B cell (primary cell): ENCODE measurements at regions of chr9 and their contacts with region 1.

Region 1: DNA sequence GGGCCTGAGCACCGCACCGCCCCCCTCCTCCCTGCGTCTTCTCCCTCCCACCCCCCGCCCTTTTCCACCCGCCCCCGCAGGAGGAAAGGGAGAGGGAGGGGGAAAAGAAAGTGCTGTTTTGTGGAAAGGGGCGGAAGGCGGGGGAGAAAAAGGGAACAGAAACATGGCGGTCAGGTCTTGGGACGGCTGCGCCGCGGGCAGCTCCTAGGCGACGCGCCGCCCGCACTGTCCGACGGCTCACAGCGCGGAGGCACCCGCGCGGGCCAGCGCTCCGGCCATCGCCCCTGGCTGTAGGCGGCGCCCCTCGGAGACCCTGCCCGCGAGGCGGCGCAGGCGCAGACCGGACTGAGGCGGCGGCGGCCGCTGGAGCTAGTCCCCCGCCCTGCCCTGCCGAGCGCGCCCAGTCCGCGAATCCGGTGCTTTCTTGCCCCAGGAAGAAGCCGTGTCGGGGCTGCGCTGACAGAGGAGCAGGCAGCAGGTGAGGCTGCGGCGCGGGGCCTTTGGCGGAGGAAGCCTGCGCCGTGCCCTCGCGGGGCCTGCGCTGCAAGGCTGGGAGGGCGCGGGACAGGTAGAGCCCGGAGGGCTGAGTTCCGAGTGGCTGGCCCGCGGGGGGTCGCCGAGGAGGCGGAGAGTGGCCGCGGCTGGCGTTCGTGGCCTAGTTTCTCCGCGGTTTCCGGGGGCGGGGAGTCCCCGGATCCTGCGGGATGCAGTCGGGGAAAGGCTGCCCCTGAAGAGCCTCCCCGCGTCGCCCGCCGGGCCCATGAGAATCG is at the start of gene DENND4C:
- DNase-seq: peak; percentile 87
- ATAC-seq: peak; percentile 76
- H3K4me3 ChIP-seq: peak within 1 kb of the TSS; percentile 79 to 89 (median 83)
- H3K4me3 Mint-ChIP-seq: no peak within 1 kb of the TSS
- H3K27ac ChIP-seq: peak within 1 kb of the TSS; percentile 28 to 72
- H3K27ac Mint-ChIP-seq: peak within 1 kb of the TSS; percentile 88
- H3K4me1 ChIP-seq: peaks cover 23 to 27% of the 10 kb centered on the region in 2 donors
- H3K4me1 Mint-ChIP-seq: peaks cover 15% of the 10 kb centered on the region
- H3K27me3 ChIP-seq: no peaks in the 10 kb centered on the region
- H3K27me3 Mint-ChIP-seq: no peaks in the 10 kb centered on the region
- CTCF ChIP-seq: no peak
- total RNA-seq, gene DENND4C: 44.8 and 52.4 TPM in 2 replicates

Region 2: GRCh38 chr9:19127881-19128500 is 102.5 kb before region 1 on chr9:
- CTCF ChIA-PET with region 1: no interaction called
- POLR2A ChIA-PET with region 1: interaction called, 4 read pairs
- intact Hi-C with region 1: loop called (anchors 2 kb)
- DNase-seq: no peak
- ATAC-seq: peak; percentile 10
- H3K4me3 ChIP-seq: peak overlapping the region; percentile 72 to 82 (median 77)
- H3K4me3 Mint-ChIP-seq: peak overlapping the region; percentile 96
- H3K27ac ChIP-seq: peak overlapping the region; percentile 66 to 67
- H3K27ac Mint-ChIP-seq: peak overlapping the region; percentile 88
- H3K4me1 ChIP-seq: peaks cover 5 to 26% of the 10 kb centered on the region in 2 donors
- H3K4me1 Mint-ChIP-seq: peaks cover 28% of the 10 kb centered on the region
- H3K27me3 ChIP-seq: no peaks in the 10 kb centered on the region
- H3K27me3 Mint-ChIP-seq: no peaks in the 10 kb centered on the region
- CTCF ChIP-seq: no peak

Region 3: DNA sequence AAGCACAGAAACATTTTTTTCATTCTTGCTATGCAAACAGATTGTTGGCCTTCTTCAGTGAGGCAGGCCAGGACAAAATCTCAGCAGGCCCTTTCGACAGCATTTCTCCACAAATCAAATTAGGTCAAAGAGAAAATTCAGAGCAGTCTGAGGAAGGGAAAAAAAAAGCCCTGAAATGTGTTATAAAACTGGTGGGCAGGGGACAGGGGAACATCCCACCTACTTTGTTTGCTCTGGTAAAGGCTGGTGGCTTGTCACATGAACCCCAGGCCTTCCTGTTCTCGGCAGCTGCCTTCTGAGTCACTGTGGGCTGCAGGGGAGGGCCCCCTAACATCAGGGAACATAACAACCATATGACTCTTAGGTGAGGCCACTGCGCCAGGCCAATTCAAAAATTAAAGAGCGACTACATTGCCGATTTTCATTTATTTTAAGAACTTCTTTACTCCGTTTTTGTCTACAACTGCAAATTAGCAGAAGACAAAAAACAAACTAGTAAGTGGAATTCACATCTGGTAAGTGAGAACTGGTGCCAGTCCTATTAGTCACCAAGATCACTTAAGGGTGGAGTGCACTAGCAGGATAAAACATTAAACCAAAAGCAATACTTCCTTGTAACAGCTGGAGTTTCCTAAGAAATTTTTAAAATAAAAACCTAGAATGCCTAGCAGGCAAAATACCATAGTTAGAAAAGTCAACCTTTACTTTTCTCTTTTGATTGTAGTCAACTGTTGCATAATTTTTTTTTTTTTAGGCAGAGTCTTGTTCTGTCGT is 46.2 kb before region 1 on chr9:
- CTCF ChIA-PET with region 1: interaction called, 4 read pairs
- POLR2A ChIA-PET with region 1: interaction called, 5 read pairs
- intact Hi-C with region 1: loop called (anchors 2 kb)
- DNase-seq: peak; percentile 62
- ATAC-seq: peak; percentile 97
- H3K4me3 ChIP-seq: no peak overlapping the region
- H3K4me3 Mint-ChIP-seq: peak overlapping the region; percentile 39
- H3K27ac ChIP-seq: peak overlapping the region; percentile 33 to 58
- H3K27ac Mint-ChIP-seq: peak overlapping the region; percentile 92
- H3K4me1 ChIP-seq: peaks cover 3 to 9% of the 10 kb centered on the region in 2 donors
- H3K4me1 Mint-ChIP-seq: peaks cover 12% of the 10 kb centered on the region
- H3K27me3 ChIP-seq: no peaks in the 10 kb centered on the region
- H3K27me3 Mint-ChIP-seq: no peaks in the 10 kb centered on the region
- CTCF ChIP-seq: no peak

Region 4: DNA sequence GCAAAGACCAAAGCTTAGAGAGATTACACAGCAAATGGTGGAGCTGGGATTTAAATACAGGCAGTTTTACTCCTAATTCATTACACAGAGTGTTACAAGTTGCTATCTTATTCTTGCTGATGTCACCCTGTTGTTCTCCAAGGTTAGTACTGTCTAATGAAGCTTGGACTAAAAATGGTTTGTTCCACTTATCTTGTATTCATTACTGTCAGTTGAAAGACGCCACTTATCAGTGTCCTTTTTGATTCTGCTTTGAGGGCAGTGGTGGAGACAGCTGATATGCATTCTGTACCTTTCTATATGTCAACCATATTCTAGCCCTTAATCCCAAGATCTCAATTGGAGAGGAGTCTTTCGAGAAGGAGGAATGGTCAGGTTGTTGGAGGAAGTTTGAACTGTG is 14.1 kb before region 1 on chr9:
- CTCF ChIA-PET with region 1: no interaction called
- POLR2A ChIA-PET with region 1: no interaction called
- intact Hi-C with region 1: no loop called
- DNase-seq: no peak
- ATAC-seq: no peak
- H3K4me3 ChIP-seq: no peak overlapping the region
- H3K4me3 Mint-ChIP-seq: no peak overlapping the region
- H3K27ac ChIP-seq: no peak overlapping the region
- H3K27ac Mint-ChIP-seq: no peak overlapping the region
- H3K4me1 ChIP-seq: no peaks in the 10 kb centered on the region
- H3K4me1 Mint-ChIP-seq: no peaks in the 10 kb centered on the region
- H3K27me3 ChIP-seq: no peaks in the 10 kb centered on the region
- H3K27me3 Mint-ChIP-seq: no peaks in the 10 kb centered on the region
- CTCF ChIP-seq: no peak

Region 5: DNA sequence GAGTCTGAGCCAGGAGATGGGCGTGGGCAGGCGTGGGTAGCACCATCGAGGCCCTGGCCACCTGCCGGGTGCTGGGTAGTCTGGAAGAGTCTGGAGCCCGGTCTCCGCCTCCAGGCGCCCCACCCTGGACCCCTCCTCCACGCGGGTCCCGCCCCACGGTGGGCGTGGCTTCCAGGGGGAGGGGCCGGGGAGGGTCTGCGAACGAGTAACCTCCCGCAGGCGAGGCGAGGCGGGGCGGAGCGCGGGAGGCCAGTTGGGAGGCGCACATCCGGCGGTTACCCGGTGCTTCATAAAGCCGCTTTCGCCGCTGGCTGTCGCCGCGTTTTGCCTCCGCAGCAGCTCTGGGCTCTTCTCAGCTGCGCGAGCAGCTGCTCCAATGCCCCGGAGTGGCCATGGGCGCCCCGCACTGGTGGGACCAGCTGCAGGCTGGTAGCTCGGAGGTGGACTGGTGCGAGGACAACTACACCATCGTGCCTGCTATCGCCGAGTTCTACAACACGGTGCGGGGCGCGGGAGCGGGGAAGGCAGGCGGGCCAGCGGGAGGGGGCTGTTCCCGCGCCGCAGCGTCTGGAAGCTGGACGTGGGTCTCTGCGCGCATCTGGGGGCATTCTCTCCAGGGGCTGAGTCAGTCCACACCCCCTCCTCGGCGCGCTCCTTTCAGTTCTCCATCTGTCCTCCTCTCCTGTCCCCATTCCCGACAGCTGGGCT is 178.3 kb after region 1 on chr9 and contains the start of gene ACER2:
- CTCF ChIA-PET with region 1: no interaction called
- POLR2A ChIA-PET with region 1: no interaction called
- intact Hi-C with region 1: loop called (anchors 5 kb)
- DNase-seq: peak; percentile 92
- ATAC-seq: peak; percentile 97
- H3K4me3 ChIP-seq: peak within 1 kb of the TSS; percentile 77 to 94 (median 92)
- H3K4me3 Mint-ChIP-seq: peak within 1 kb of the TSS; percentile 94
- H3K27ac ChIP-seq: peak within 1 kb of the TSS; percentile 31 to 51
- H3K27ac Mint-ChIP-seq: peak within 1 kb of the TSS; percentile 86
- H3K4me1 ChIP-seq: peaks cover 12 to 15% of the 10 kb centered on the region in 2 donors
- H3K4me1 Mint-ChIP-seq: peaks cover 12% of the 10 kb centered on the region
- H3K27me3 ChIP-seq: no peaks in the 10 kb centered on the region
- H3K27me3 Mint-ChIP-seq: no peaks in the 10 kb centered on the region
- CTCF ChIP-seq: no peak
- total RNA-seq, gene ACER2: 5.5 and 6.1 TPM in 2 replicates